Dendritic cell treated with granulocyte-macrophage colony-stimulating factor and Interleukin-4, amounts not matched to agents 40 ng/mL and 50 ng/mL, for 4 days (primary cell): ENCODE measurements at regions of chr4 and their contacts with region 1.

Region 1: DNA sequence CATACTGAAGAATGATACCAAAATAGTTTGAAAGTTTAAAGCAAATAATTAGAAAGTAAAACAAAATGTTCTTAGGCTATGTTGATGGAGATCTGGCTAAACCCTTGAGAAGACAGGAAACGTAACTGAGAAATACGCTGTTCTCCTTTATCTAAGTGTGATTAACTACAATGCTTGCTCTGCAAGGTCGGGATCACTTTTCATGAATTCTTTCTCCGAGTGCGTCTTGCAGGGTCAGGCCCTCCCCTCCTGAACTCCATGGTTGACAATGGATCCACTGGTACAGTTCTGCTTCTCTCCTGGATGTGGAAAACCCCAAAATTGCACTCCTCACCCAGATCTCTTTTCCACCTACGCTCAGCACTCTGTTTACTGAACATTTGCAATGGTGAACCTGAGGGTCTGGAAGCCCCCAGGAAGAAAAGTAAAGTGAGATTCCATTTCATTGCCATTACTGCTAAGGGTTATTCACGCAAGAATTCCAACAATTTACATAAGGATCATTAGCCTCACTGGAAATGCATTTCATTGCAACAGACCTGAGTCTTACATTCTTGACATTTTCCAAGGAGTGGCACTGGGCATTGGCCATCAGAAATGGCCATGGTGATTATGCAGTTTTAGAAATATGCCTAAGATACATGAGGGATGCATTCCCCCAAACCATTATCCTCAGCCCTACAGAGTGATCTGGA is 24.6 kb upstream of the WWC2 start:
- H3K4me3 Mint-ChIP-seq: no peak overlapping the region
- H3K27ac Mint-ChIP-seq: no peak overlapping the region
- H3K4me1 Mint-ChIP-seq: no peaks in the 10 kb centered on the region
- H3K27me3 Mint-ChIP-seq: peaks cover 4% of the 10 kb centered on the region

Region 2: DNA sequence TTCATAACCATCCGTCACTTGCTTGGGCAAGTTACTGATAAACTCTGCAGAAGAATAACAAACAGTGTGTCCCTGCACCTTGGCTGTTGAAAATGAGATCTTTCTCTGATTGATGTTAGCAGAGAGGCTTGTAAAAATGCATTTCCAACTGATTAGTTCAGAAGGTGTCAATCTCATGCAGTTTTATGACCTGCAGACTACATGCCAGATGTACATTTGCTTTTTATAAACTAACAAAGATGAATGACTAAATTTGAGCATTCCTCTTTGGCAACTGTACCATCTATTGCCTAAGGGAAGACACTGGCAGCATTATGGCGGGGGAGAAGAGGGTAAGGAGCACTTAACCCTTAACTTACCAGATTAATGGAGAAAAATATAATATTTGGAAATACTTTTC is 350.0 kb before region 1 on chr4:
- intact Hi-C with region 1: no loop called
- H3K4me3 Mint-ChIP-seq: no peak overlapping the region
- H3K27ac Mint-ChIP-seq: no peak overlapping the region
- H3K4me1 Mint-ChIP-seq: no peaks in the 10 kb centered on the region
- H3K27me3 Mint-ChIP-seq: no peaks in the 10 kb centered on the region

Region 3: DNA sequence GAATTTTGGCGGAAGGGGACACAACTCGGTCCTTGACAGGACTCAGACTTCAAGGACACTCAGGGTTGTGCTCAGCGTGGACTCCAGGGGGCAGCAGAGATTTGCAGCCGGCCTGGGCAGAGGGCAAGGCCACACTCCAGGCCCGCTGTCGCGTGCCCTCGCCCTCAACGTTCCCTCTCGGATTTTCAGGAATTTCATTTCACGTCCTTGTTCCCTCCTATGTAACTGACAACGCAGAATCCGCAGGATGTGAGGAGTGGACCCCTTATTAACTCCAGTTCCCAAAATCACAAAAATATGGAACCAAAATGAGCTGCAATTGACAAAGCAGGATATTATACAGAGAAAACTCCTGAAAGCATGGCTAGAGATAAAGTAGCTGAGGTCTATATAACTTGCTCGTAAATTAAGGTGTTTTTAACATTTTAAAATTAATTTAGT is 136.2 kb before region 1 on chr4:
- intact Hi-C with region 1: loop called (anchors 2 kb)
- H3K4me3 Mint-ChIP-seq: no peak overlapping the region
- H3K27ac Mint-ChIP-seq: no peak overlapping the region
- H3K4me1 Mint-ChIP-seq: no peaks in the 10 kb centered on the region
- H3K27me3 Mint-ChIP-seq: peaks cover 18% of the 10 kb centered on the region

Region 4: GRCh38 chr4:183256756-183257385 is 182.4 kb after region 1 on chr4:
- intact Hi-C with region 1: loop called (anchors 1 kb)
- H3K4me3 Mint-ChIP-seq: no peak overlapping the region
- H3K27ac Mint-ChIP-seq: no peak overlapping the region
- H3K4me1 Mint-ChIP-seq: peaks cover 5% of the 10 kb centered on the region
- H3K27me3 Mint-ChIP-seq: no peaks in the 10 kb centered on the region

Region 5: DNA sequence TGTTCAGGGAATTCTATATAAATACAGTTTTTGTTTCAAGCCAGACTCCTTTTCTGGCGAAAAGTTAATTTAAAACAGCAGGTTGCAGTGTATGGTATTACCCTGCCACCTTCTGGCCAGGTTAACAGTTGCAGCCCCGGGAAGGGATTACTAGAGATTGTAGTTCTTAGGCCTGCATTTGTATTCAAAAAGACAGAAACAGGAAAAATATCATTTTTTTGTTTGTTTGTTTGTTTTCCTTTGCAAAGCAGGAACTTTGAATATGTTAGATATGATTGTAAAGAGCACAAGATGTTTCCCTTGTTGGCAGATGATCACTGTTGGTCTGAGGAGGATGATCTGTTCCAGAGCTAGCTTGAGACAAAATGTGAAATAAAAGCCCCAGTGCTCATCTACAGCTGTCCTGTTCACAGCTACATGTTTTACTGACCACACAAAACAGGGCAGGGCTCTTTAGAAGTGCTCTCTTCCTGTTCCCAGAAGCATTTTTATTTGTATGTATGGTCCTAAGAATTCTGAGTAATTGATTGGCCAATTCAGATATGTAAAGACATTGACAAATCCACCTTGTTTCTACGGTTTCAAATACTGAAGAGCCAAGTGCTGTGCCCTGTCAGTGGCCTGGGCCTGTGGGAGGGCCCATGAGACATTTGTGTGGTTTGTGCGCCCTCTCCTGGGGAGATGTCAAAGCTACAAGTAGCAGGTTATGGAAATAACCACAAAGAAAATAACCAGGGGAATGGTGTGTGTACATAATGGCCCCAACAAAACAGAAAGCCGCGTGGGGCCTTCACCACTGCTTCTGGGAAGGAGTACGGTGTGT is 187.7 kb after region 1 on chr4:
- intact Hi-C with region 1: loop called (anchors 1 kb)
- H3K4me3 Mint-ChIP-seq: no peak overlapping the region
- H3K27ac Mint-ChIP-seq: no peak overlapping the region
- H3K4me1 Mint-ChIP-seq: peaks cover 4% of the 10 kb centered on the region
- H3K27me3 Mint-ChIP-seq: no peaks in the 10 kb centered on the region

Region 6: DNA sequence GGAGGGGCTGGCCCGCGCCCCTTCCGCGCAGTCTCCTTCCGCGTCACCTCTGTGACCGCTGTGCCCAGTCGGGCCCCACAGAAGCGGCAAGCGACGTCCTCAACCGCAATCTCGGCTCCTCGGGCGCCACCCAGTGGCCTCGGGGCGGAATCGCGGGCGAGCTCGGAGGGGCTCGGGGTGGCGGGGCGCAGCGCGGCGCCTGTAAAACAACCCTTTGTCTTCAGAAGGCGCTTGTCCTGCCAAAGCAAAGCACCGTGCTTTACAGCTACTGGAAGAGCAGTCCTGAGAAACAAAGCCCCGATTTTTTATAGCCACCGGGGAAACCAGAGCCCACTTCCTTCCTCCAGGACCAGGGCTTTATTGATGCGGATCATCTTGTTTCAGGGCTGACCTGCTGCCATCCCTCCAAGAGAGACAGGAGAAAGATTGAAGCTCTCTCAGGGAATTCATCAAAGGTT is 332.7 kb after region 1 on chr4:
- intact Hi-C with region 1: loop called (anchors 10 kb)
- H3K4me3 Mint-ChIP-seq: peak overlapping the region; percentile 58
- H3K27ac Mint-ChIP-seq: peak overlapping the region; percentile 33
- H3K4me1 Mint-ChIP-seq: peaks cover 29% of the 10 kb centered on the region
- H3K27me3 Mint-ChIP-seq: peaks cover 12% of the 10 kb centered on the region